K562 (cell line): ENCODE measurements at regions of chr15 and their contacts with region 1.

Region 1: GRCh38 chr15:63752075-63752684 is 81.6 kb downstream of the HERC1 start:
- DNase-seq: peak; percentile 33 to 72 (median 45)
- ATAC-seq: peak; percentile 92
- H3K4me3 ChIP-seq: no peak overlapping the region
- H3K27ac ChIP-seq: no peak overlapping the region
- H3K4me1 ChIP-seq: no peaks in the 10 kb centered on the region
- H3K27me3 ChIP-seq: no peaks in the 10 kb centered on the region
- CTCF ChIP-seq: peak; percentile 67 to 80 (median 72)
- EP300 ChIP-seq: no peak
- POLR2A ChIP-seq: no peak
- RAD21 ChIP-seq: peak; percentile 77 to 90

Region 2: GRCh38 chr15:63600616-63601025 is 151.6 kb before region 1 on chr15:
- CTCF ChIA-PET with region 1: no interaction called
- POLR2A ChIA-PET with region 1: no interaction called
- in situ Hi-C with region 1: no loop called
- intact Hi-C with region 1: no loop called
- DNase-seq: no peak
- ATAC-seq: no peak
- H3K4me3 ChIP-seq: no peak overlapping the region
- H3K27ac ChIP-seq: no peak overlapping the region
- H3K4me1 ChIP-seq: peaks cover 0 to 18% of the 10 kb centered on the region in 2 experiments; a peak in 2 of 5 replicates
- H3K27me3 ChIP-seq: no peaks in the 10 kb centered on the region
- CTCF ChIP-seq: no peak
- EP300 ChIP-seq: no peak
- POLR2A ChIP-seq: no peak
- RAD21 ChIP-seq: no peak

Region 3: DNA sequence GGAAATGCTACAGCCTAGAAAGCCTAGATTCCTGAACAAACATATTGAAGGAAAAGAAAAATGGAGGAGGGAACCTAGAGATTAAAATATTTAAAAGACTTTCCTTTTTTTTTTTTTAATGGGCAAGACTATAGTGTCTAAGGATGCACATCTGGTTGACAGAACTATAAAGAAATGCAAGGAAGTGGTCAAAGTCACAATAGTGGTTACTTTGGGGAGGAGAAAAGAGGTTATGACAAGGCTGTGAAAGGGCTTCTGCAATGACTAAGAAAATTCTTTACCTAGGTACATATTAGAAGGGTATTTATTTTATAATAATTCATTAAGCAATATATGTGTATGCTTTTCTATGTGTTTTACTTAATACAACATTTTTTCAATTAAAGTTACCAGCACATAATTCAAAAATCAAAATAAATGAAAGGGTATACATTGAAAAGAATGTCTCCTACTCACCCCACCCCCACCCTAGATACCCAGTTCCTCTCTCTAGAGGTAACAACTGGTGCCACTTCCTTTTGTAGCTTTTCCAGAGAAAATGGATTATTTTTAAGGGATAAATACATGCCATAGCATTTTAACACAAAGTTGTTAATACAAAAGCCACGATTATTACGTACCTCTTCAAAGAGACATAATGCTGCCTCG is 11.4 kb after region 1 on chr15:
- CTCF ChIA-PET with region 1: interaction called, 3 read pairs
- POLR2A ChIA-PET with region 1: interaction called, 10 read pairs
- in situ Hi-C with region 1: no loop called
- intact Hi-C with region 1: no loop called
- DNase-seq: no peak
- ATAC-seq: no peak; the same call in 2 of the 3 replicates
- H3K4me3 ChIP-seq: no peak overlapping the region
- H3K27ac ChIP-seq: peak overlapping the region; percentile 8; the same call in 1 of the 3 replicates
- H3K4me1 ChIP-seq: peaks cover 0 to 14% of the 10 kb centered on the region in 2 experiments; a peak in 2 of 5 replicates
- H3K27me3 ChIP-seq: no peaks in the 10 kb centered on the region
- CTCF ChIP-seq: no peak
- EP300 ChIP-seq: no peak
- POLR2A ChIP-seq: no peak
- RAD21 ChIP-seq: no peak

Region 4: DNA sequence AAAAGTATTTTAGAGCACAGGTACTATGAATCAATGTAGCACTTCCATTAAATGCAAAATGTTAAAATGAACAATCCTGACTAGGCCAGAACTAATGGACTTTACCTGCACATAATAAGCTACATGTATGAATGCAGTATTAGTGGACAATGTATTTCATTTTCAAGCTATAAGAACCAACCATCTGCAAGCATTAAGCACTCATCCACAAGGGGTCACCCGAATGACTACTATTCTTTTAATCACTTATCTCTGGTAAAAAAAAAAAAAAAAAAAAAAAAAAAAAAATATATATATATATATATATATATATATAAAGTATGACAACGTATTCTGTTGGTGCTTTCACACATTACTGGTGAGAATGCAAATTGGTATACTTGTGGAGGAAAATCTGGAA is 74.3 kb after region 1 on chr15:
- CTCF ChIA-PET with region 1: no interaction called
- POLR2A ChIA-PET with region 1: no interaction called
- in situ Hi-C with region 1: no loop called
- intact Hi-C with region 1: loop called (anchors 5 kb)
- DNase-seq: peak in 1 of 4 experiments; percentile 66
- ATAC-seq: peak; percentile 51; the same call in 1 of the 3 replicates
- H3K4me3 ChIP-seq: no peak overlapping the region
- H3K27ac ChIP-seq: peak overlapping the region; percentile 53; the same call in 1 of the 3 replicates
- H3K4me1 ChIP-seq: peaks cover 16 to 23% of the 10 kb centered on the region in 2 experiments
- H3K27me3 ChIP-seq: no peaks in the 10 kb centered on the region
- CTCF ChIP-seq: peak; percentile 17 to 53 (median 25); a peak in 3 of 6 replicates
- EP300 ChIP-seq: no peak
- POLR2A ChIP-seq: no peak
- RAD21 ChIP-seq: peak; percentile 41 to 47

Region 5: DNA sequence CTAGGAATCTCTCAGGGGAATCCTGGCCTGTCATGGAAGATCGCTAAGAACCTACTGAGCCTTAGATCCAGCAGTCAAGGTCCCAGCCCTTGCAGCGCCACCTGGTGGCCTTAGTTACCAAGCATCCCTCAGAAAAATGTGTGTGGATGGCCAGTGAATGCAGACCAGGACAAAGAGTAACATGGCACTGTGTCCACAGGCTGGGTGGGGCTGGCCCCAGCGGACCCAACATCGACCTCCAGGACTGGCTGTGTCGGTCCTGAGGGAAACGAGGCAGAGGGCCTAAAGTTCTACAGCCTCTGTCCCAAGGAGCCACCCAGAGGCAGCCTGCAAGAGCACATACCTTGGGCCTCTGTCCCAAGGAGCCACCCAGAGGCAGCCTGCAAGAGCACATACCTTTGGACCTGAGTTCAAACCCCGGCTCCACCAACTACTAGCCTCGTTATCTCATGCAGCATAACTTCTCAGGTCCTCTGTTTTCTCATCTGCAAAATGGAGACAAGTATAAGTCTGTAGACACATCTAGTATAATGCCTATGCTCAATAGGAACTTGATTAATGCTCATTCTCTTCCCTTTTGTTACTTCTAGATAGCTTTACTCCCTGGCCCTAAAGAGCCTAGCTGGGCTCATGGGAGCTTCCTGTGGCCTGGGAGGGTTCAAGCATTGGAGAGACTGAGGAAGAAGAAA is 139.0 kb after region 1 on chr15:
- CTCF ChIA-PET with region 1: interaction called, 13 read pairs
- POLR2A ChIA-PET with region 1: no interaction called
- in situ Hi-C with region 1: no loop called
- intact Hi-C with region 1: loop called (anchors 1 kb)
- DNase-seq: peak; percentile 75 to 93 (median 80)
- ATAC-seq: peak; percentile 72
- H3K4me3 ChIP-seq: no peak overlapping the region
- H3K27ac ChIP-seq: peak overlapping the region; percentile 40; the same call in 2 of the 3 replicates
- H3K4me1 ChIP-seq: peaks cover 51 to 57% of the 10 kb centered on the region in 2 experiments
- H3K27me3 ChIP-seq: no peaks in the 10 kb centered on the region
- CTCF ChIP-seq: peak; percentile 82 to 97 (median 85)
- EP300 ChIP-seq: peak; percentile 7; the same call in 1 of the 2 replicates
- POLR2A ChIP-seq: no peak
- RAD21 ChIP-seq: peak; percentile 87 to 93

Region 6: GRCh38 chr15:63986751-63987341 is 234.7 kb after region 1 on chr15:
- CTCF ChIA-PET with region 1: no interaction called
- POLR2A ChIA-PET with region 1: no interaction called
- in situ Hi-C with region 1: no loop called
- intact Hi-C with region 1: loop called (anchors 5 kb)
- DNase-seq: peak in 1 of 4 experiments; percentile 47
- ATAC-seq: peak; percentile 58
- H3K4me3 ChIP-seq: no peak overlapping the region
- H3K27ac ChIP-seq: peak overlapping the region; percentile 37; the same call in 1 of the 3 replicates
- H3K4me1 ChIP-seq: peaks cover 17 to 32% of the 10 kb centered on the region in 2 experiments
- H3K27me3 ChIP-seq: no peaks in the 10 kb centered on the region
- CTCF ChIP-seq: peak in 1 of 3 experiments; percentile 39; a peak in 2 of 6 replicates
- EP300 ChIP-seq: peak; percentile 59
- POLR2A ChIP-seq: no peak
- RAD21 ChIP-seq: peak in 1 of 2 experiments; percentile 24; a peak in 1 of 4 replicates

Region 7: DNA sequence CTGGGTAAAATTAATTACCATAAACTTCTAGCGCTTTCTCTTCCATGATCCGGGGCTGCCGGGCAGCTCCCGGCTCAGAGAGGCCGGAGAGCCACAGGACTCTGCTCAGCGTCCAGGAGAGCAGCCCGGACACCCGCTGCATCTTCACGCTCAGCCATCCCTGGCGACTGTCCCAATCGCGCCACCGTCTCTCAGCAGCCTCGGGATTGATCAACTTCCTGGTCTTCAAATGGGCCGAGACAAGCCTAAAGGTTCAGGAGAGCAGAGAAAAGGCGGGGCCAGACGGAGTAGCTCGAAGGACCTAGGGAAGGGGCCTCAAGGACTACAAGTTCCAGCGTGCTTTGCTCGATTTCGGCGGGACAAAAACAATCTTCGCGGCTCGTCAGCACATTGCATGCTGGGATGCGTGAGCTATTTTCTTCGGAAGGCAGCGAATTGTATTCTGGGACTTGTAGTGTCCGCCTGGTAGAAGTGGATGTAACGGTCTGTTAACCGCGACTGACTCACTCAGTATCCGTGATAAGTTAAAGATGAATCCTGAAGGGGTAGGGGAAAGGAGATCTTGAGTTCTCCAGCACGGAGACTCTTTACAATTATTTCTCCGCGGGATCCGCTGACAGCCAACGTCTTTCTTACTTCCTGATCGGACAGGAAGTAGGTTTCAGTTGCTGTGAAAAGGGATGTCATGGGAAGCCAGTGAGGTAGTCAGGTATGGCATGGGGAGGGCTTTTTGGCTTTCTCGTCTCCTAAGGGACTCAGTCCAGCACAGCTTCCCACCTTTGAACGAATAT is 341.6 kb after region 1 on chr15 and contains the start of gene CIAO2A:
- CTCF ChIA-PET with region 1: interaction called, 18 read pairs
- POLR2A ChIA-PET with region 1: interaction called, 7 read pairs
- in situ Hi-C with region 1: no loop called
- intact Hi-C with region 1: no loop called
- DNase-seq: peak; percentile 85 to 99 (median 89)
- ATAC-seq: peak; percentile 84
- H3K4me3 ChIP-seq: peak within 1 kb of the TSS; percentile 81
- H3K27ac ChIP-seq: peak within 1 kb of the TSS; percentile 99
- H3K4me1 ChIP-seq: peaks cover 8 to 25% of the 10 kb centered on the region in 2 experiments
- H3K27me3 ChIP-seq: no peaks in the 10 kb centered on the region
- CTCF ChIP-seq: no peak; a peak in 1 of 6 replicates
- EP300 ChIP-seq: peak; percentile 30
- POLR2A ChIP-seq: peak; percentile 88
- RAD21 ChIP-seq: no peak
- polyA plus RNA-seq, gene CIAO2A: 354 to 408 TPM